PC-9 (cell line): ENCODE measurements at regions of chr2 and their contacts with region 1.

Region 1: GRCh38 chr2:241844066-241844728 is 14.5 kb downstream of the PDCD1 start:
- DNase-seq: peak in 1 of 2 experiments; percentile 84
- H3K4me3 ChIP-seq: no peak overlapping the region
- H3K27ac ChIP-seq: no peak overlapping the region
- H3K4me1 ChIP-seq: no peaks in the 10 kb centered on the region
- H3K27me3 ChIP-seq: peaks cover 49% of the 10 kb centered on the region
- CTCF ChIP-seq: no peak

Region 2: GRCh38 chr2:241190291-241190981 is 653.8 kb before region 1 on chr2:
- CTCF ChIA-PET with region 1: no interaction called
- POLR2A ChIA-PET with region 1: interaction called, 19 read pairs
- intact Hi-C with region 1: no loop called
- DNase-seq: no peak
- H3K4me3 ChIP-seq: no peak overlapping the region
- H3K27ac ChIP-seq: no peak overlapping the region
- H3K4me1 ChIP-seq: no peaks in the 10 kb centered on the region
- H3K27me3 ChIP-seq: peaks cover 42% of the 10 kb centered on the region
- CTCF ChIP-seq: no peak

Region 3: GRCh38 chr2:241774646-241775222 is 69.5 kb before region 1 on chr2:
- CTCF ChIA-PET with region 1: no interaction called
- POLR2A ChIA-PET with region 1: no interaction called
- intact Hi-C with region 1: loop called (anchors 2 kb)
- DNase-seq: peak; percentile 64 to 91
- H3K4me3 ChIP-seq: no peak overlapping the region
- H3K27ac ChIP-seq: no peak overlapping the region
- H3K4me1 ChIP-seq: peaks cover 18% of the 10 kb centered on the region
- H3K27me3 ChIP-seq: no peaks in the 10 kb centered on the region
- CTCF ChIP-seq: no peak

Region 4: DNA sequence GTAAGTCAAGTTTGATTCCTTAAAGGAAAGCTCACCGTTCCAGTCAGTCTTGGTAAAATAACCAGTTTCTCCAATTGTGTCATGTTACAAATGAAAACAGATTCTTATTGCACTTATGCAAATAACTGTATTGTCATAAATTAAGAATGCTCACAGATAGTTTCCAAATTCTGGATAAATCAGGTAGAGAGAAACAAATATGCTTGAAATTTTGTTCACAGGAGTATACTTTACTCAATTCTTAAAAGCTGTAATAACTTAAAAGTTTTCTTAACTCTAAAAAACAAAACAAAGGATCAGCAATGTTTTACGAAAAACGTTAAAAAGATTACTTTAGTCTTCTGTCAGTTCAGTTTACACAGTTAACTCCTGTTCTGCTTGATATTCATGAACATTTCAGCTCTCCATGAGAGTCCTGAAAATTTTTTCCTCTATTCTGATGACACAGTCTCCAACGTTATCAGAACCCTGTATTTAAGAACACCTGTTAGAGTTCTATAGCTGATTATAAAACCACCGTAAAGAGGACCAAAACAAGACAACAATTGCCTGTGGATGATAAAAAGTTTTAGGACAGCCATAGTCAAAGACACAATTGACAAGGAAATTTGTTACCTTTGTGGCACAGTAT is 63.1 kb before region 1 on chr2:
- CTCF ChIA-PET with region 1: no interaction called
- POLR2A ChIA-PET with region 1: interaction called, 11 read pairs
- intact Hi-C with region 1: no loop called
- DNase-seq: no peak
- H3K4me3 ChIP-seq: no peak overlapping the region
- H3K27ac ChIP-seq: no peak overlapping the region
- H3K4me1 ChIP-seq: no peaks in the 10 kb centered on the region
- H3K27me3 ChIP-seq: 0 out of 2 replicates have a peak, but pooled peaks cover 3% of the 10 kb centered on the region
- CTCF ChIP-seq: no peak